Activated CD8-positive, alpha-beta T cell treated with anti-CD3 and anti-CD28 coated beads for 36 hours (primary cell): ENCODE measurements at regions of chr20 and their contacts with region 1.

Region 1: DNA sequence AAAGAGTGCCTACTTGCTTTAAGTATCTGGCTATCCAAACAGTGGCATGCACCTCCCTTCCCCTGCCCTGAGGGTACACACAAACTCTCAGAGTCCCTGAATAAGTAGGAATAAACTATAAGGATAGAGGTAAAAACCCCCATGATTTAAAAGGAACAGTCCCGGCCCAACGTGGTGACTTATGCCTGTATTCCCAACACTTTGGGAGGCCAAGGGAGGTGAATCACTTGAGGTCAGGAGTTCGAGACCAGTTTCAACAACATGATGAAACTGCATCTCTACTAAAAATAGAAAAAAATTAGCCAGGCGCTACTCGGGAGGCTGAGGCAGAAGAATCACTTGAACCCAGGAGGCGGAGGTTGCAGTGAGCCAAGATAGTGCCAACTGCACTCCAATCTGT is 22.2 kb downstream of the SAMHD1 start:
- DNase-seq: no peak
- ATAC-seq: no peak
- H3K4me3 Mint-ChIP-seq: no peak overlapping the region
- H3K27ac Mint-ChIP-seq: peak overlapping the region; percentile 87
- H3K4me1 Mint-ChIP-seq: peaks cover 58% of the 10 kb centered on the region
- H3K27me3 Mint-ChIP-seq: no peaks in the 10 kb centered on the region
- CTCF ChIP-seq: no peak

Region 2: DNA sequence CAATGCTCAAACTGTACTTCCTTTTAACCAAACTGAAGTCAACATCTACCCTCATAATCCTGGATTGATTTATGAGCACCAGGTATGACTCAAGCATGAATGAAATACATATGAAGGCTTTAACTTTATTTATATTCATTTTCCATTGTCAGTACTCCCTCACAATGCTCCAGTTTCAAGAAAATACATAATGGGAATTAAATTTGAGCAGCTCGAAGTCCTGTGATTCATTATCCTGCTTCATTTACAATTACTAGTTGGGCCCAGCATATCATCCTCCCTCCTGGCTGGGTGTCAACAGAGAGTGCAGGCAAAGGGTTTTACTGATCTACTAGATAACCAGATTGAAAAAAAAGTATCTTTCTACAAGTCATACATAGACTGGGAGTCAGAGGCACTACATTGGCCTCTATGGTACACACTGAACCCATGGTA is 12.1 kb after region 1 on chr20:
- CTCF ChIA-PET with region 1: no interaction called
- POLR2A ChIA-PET with region 1: interaction called, 3 read pairs
- intact Hi-C with region 1: loop called (anchors 2 kb)
- DNase-seq: no peak
- ATAC-seq: peak; percentile 67
- H3K4me3 Mint-ChIP-seq: no peak overlapping the region
- H3K27ac Mint-ChIP-seq: peak overlapping the region; percentile 81
- H3K4me1 Mint-ChIP-seq: peaks cover 62% of the 10 kb centered on the region
- H3K27me3 Mint-ChIP-seq: no peaks in the 10 kb centered on the region
- CTCF ChIP-seq: no peak